ENCODE measurements at regions of chr5 and their contacts with region 1.

Region 1: GRCh38 chr5:108260117-108260857 is 121.6 kb downstream of the FBXL17 start:
- DNase-seq: peak; percentile 34
- ATAC-seq: peak; percentile 97
- H3K4me3 ChIP-seq: no peak overlapping the region
- H3K27ac ChIP-seq: no peak overlapping the region
- H3K4me1 ChIP-seq: no peaks in the 10 kb centered on the region
- H3K27me3 ChIP-seq: no peaks in the 10 kb centered on the region
- CTCF ChIP-seq: peak; percentile 91 to 94 (median 93)
- EP300 ChIP-seq: no peak
- POLR2A ChIP-seq: no peak
- RAD21 ChIP-seq: peak; percentile 89

Region 2: DNA sequence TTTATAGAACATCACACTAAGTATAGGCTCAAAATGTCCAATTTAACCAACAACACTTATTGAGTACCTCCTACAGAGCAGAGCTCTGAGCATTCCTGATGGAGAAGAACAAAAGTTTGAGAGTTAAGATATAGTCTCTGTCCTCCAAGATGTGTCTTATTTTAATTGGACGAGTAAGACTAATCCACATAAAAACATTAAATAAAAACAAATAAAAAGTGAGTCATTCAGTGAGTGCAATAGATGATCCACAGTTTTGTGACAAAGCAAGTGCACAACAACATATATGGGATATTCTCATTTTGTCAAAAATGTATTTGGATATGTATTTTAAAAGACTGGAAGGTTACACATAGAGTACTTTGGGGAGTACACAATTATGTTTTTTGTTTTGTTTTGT is 155.8 kb before region 1 on chr5:
- CTCF ChIA-PET with region 1: no interaction called
- POLR2A ChIA-PET with region 1: no interaction called
- RAD21 ChIA-PET with region 1: no interaction called
- SMC1A ChIA-PET with region 1: no interaction called
- in situ Hi-C with region 1: no loop called
- intact Hi-C with region 1: no loop called
- DNase-seq: no peak
- ATAC-seq: no peak
- H3K4me3 ChIP-seq: no peak overlapping the region
- H3K27ac ChIP-seq: no peak overlapping the region
- H3K4me1 ChIP-seq: no peaks in the 10 kb centered on the region
- H3K27me3 ChIP-seq: no peaks in the 10 kb centered on the region
- CTCF ChIP-seq: no peak
- EP300 ChIP-seq: no peak
- POLR2A ChIP-seq: no peak
- RAD21 ChIP-seq: no peak

Region 3: GRCh38 chr5:108238936-108239887 is 21.1 kb before region 1 on chr5:
- CTCF ChIA-PET with region 1: interaction called, 35 read pairs
- POLR2A ChIA-PET with region 1: no interaction called
- RAD21 ChIA-PET with region 1: no interaction called
- SMC1A ChIA-PET with region 1: interaction called, 12 read pairs
- in situ Hi-C with region 1: no loop called
- intact Hi-C with region 1: no loop called
- DNase-seq: no peak
- ATAC-seq: no peak
- H3K4me3 ChIP-seq: no peak overlapping the region
- H3K27ac ChIP-seq: no peak overlapping the region
- H3K4me1 ChIP-seq: no peaks in the 10 kb centered on the region
- H3K27me3 ChIP-seq: no peaks in the 10 kb centered on the region
- CTCF ChIP-seq: no peak
- EP300 ChIP-seq: no peak
- POLR2A ChIP-seq: no peak
- RAD21 ChIP-seq: no peak

Region 4: GRCh38 chr5:108295578-108296368 is 35.5 kb after region 1 on chr5:
- CTCF ChIA-PET with region 1: interaction called, 11 read pairs
- POLR2A ChIA-PET with region 1: no interaction called
- RAD21 ChIA-PET with region 1: interaction called, 3 read pairs
- SMC1A ChIA-PET with region 1: interaction called, 4 read pairs
- in situ Hi-C with region 1: no loop called
- intact Hi-C with region 1: no loop called
- DNase-seq: no peak
- ATAC-seq: no peak; the same call in 2 of the 3 replicates
- H3K4me3 ChIP-seq: no peak overlapping the region
- H3K27ac ChIP-seq: no peak overlapping the region
- H3K4me1 ChIP-seq: no peaks in the 10 kb centered on the region
- H3K27me3 ChIP-seq: no peaks in the 10 kb centered on the region
- CTCF ChIP-seq: no peak
- EP300 ChIP-seq: no peak
- POLR2A ChIP-seq: no peak
- RAD21 ChIP-seq: no peak

Region 5: GRCh38 chr5:108345541-108346171 is 85.4 kb after region 1 on chr5:
- CTCF ChIA-PET with region 1: interaction called, 142 read pairs
- POLR2A ChIA-PET with region 1: interaction called, 3 read pairs
- RAD21 ChIA-PET with region 1: interaction called, 81 read pairs
- SMC1A ChIA-PET with region 1: interaction called, 88 read pairs
- in situ Hi-C with region 1: loop called (anchors 5 kb)
- intact Hi-C with region 1: loop called (anchors 1 kb)
- DNase-seq: peak; percentile 5
- ATAC-seq: peak; percentile 86
- H3K4me3 ChIP-seq: no peak overlapping the region
- H3K27ac ChIP-seq: no peak overlapping the region
- H3K4me1 ChIP-seq: no peaks in the 10 kb centered on the region
- H3K27me3 ChIP-seq: no peaks in the 10 kb centered on the region
- CTCF ChIP-seq: peak; percentile 19 to 55 (median 30); a peak in 3 of 6 replicates
- EP300 ChIP-seq: no peak
- POLR2A ChIP-seq: no peak
- RAD21 ChIP-seq: peak; percentile 48

Region 6: GRCh38 chr5:108521841-108522506 is 261.7 kb after region 1 on chr5:
- CTCF ChIA-PET with region 1: interaction called, 3 read pairs
- POLR2A ChIA-PET with region 1: no interaction called
- RAD21 ChIA-PET with region 1: interaction called, 3 read pairs
- SMC1A ChIA-PET with region 1: no interaction called
- in situ Hi-C with region 1: no loop called
- intact Hi-C with region 1: loop called (anchors 1 kb)
- DNase-seq: peak; percentile 57
- ATAC-seq: peak; percentile 88
- H3K4me3 ChIP-seq: no peak overlapping the region
- H3K27ac ChIP-seq: peak overlapping the region; percentile 54
- H3K4me1 ChIP-seq: peaks cover 14% of the 10 kb centered on the region
- H3K27me3 ChIP-seq: no peaks in the 10 kb centered on the region
- CTCF ChIP-seq: peak; percentile 54 to 70 (median 69); a peak in 5 of 6 replicates
- EP300 ChIP-seq: no peak
- POLR2A ChIP-seq: no peak
- RAD21 ChIP-seq: peak; percentile 83

Measured in GM12878 (cell line).